Ascending aorta (tissue), 2 donors: ENCODE measurements at regions of chr9 and their contacts with region 1.

Region 1: GRCh38 chr9:81609782-81610739 is 79.3 kb downstream of the TLE1 start:
- DNase-seq: no peak
- H3K4me3 ChIP-seq: no peak overlapping the region
- H3K27ac ChIP-seq: peak overlapping the region; percentile 50 to 91
- H3K4me1 ChIP-seq: peaks cover 3 to 15% of the 10 kb centered on the region in 2 donors
- H3K27me3 ChIP-seq: no peaks in the 10 kb centered on the region
- CTCF ChIP-seq: no peak

Region 2: DNA sequence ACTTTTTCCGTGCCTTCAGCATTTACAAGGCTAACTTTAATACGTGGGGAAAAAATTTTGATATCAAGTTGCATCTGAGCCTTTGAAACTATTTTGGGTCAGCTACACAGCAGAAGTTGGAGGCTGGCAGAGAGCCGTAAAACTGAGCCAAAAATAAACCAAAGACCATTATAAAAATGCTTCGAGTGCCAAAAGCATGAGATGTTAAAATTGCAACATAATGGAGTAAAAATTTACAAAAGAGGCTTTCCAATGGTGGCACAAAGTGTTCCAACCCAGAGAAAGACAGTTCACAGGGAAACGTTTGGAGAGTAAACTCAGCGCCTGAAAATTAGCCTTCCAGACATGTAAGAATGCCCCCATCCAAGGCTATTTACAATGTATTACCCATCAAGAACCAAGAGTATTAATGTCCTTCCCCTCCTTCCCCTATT is 111.0 kb before region 1 on chr9:
- intact Hi-C with region 1: loop called (anchors 5 kb)
- DNase-seq: peak in 1 of 2 donors; percentile 78
- H3K4me3 ChIP-seq: peak overlapping the region; percentile 17 to 29
- H3K27ac ChIP-seq: peak overlapping the region; percentile 69 to 82
- H3K4me1 ChIP-seq: peaks cover 5 to 15% of the 10 kb centered on the region in 2 donors
- H3K27me3 ChIP-seq: no peaks in the 10 kb centered on the region
- CTCF ChIP-seq: no peak

Region 3: GRCh38 chr9:81557452-81558090 is 52.5 kb before region 1 on chr9:
- intact Hi-C with region 1: loop called (anchors 2 kb)
- DNase-seq: no peak
- H3K4me3 ChIP-seq: no peak overlapping the region
- H3K27ac ChIP-seq: peak overlapping the region in 1 of 2 donors; percentile 31
- H3K4me1 ChIP-seq: peaks cover 0 to 16% of the 10 kb centered on the region in 2 donors
- H3K27me3 ChIP-seq: no peaks in the 10 kb centered on the region
- CTCF ChIP-seq: no peak

Region 4: DNA sequence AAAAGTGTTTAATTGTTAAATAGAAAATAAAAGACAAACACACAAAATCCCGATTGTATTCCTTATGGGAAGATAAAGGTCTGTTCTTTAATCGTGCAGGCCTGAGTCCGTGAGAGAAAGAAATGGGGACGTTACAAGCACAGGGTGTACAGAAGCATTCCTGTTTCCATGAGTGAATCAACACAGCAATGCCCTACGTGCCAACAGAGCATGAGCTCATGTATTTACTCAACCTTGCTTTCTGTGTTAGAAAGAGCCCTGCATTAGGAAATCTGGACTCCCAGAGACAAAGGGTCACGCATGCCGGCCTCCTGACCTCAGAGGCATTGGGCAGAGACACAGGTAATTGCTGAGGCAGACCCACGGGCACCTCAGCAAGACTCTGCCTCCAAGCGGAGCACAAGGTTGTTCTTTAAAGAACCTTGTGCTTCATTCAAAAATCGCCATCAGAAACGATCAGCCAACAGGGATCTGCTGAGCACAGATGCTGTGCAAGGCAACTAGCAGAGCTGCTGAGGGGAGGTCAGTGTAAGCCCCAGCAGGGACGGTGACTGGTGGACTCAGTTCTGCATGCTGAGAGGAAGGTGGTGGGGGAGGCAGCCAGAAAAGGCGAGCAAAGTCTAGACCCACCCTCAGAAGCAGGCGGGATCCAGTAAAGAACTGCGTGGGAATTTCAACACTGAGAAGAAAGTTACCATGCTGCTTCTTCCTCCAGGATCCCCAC is 21.8 kb before region 1 on chr9:
- intact Hi-C with region 1: loop called (anchors 1 kb)
- DNase-seq: peak; percentile 49 to 93
- H3K4me3 ChIP-seq: peak overlapping the region in 1 of 2 donors; percentile 11
- H3K27ac ChIP-seq: peak overlapping the region; percentile 83 to 90
- H3K4me1 ChIP-seq: peaks cover 27 to 58% of the 10 kb centered on the region in 2 donors
- H3K27me3 ChIP-seq: no peaks in the 10 kb centered on the region
- CTCF ChIP-seq: no peak

Region 5: DNA sequence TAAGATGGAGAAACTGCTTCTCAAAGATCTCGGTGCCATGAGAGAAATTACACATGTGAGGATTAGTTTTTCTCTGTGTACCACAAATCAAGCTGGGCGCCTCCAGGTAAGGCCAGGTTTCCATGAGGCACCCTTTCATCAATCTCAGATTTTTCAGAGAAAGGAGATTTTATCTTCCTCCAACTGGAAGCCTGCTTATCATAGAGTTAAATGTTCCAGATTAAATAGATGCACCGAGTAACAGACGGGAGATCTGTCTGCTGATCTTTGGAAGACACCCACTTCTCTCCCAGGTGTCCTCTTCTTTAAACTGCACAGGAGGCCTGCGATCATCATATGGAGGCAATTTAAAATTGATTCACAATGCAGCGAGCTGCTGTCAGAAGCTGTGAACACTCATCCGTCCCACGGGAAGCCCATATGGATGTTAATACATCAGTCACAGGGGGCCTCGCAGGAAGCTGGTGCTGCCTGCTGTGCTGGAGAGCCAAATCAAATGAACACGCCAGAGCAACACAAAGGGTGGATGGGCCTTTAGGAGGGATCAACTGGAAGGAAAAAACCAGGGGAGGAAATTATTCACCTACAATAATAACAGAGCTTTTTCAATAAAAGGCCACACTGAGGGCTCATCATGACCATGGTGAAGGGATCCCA is 14.0 kb before region 1 on chr9:
- intact Hi-C with region 1: loop called (anchors 1 kb)
- DNase-seq: no peak
- H3K4me3 ChIP-seq: no peak overlapping the region
- H3K27ac ChIP-seq: peak overlapping the region; percentile 54 to 75
- H3K4me1 ChIP-seq: peaks cover 9 to 57% of the 10 kb centered on the region in 2 donors
- H3K27me3 ChIP-seq: no peaks in the 10 kb centered on the region
- CTCF ChIP-seq: no peak

Region 6: GRCh38 chr9:81716409-81716808 is 106.3 kb after region 1 on chr9:
- intact Hi-C with region 1: no loop called
- DNase-seq: no peak
- H3K4me3 ChIP-seq: no peak overlapping the region
- H3K27ac ChIP-seq: no peak overlapping the region
- H3K4me1 ChIP-seq: no peaks in the 10 kb centered on the region
- H3K27me3 ChIP-seq: no peaks in the 10 kb centered on the region
- CTCF ChIP-seq: no peak

Region 7: GRCh38 chr9:81759668-81760215 is 149.7 kb after region 1 on chr9:
- intact Hi-C with region 1: loop called (anchors 10 kb)
- DNase-seq: peak; percentile 53 to 82
- H3K4me3 ChIP-seq: no peak overlapping the region
- H3K27ac ChIP-seq: peak overlapping the region; percentile 25 to 58
- H3K4me1 ChIP-seq: peaks cover 0 to 8% of the 10 kb centered on the region in 2 donors
- H3K27me3 ChIP-seq: no peaks in the 10 kb centered on the region
- CTCF ChIP-seq: no peak